Right cardiac atrium (tissue), 5 donors: ENCODE measurements at regions of chr1 and their contacts with region 1.

Region 1: GRCh38 chr1:227428803-227429202 is 110.5 kb upstream of the CDC42BPA start:
- DNase-seq: no peak
- ATAC-seq: peak in 1 of 2 donors; percentile 34
- H3K4me3 ChIP-seq: no peak overlapping the region
- H3K27ac ChIP-seq: no peak overlapping the region
- H3K4me1 ChIP-seq: peaks cover 13% of the 10 kb centered on the region
- H3K27me3 ChIP-seq: no peaks in the 10 kb centered on the region

Region 2: DNA sequence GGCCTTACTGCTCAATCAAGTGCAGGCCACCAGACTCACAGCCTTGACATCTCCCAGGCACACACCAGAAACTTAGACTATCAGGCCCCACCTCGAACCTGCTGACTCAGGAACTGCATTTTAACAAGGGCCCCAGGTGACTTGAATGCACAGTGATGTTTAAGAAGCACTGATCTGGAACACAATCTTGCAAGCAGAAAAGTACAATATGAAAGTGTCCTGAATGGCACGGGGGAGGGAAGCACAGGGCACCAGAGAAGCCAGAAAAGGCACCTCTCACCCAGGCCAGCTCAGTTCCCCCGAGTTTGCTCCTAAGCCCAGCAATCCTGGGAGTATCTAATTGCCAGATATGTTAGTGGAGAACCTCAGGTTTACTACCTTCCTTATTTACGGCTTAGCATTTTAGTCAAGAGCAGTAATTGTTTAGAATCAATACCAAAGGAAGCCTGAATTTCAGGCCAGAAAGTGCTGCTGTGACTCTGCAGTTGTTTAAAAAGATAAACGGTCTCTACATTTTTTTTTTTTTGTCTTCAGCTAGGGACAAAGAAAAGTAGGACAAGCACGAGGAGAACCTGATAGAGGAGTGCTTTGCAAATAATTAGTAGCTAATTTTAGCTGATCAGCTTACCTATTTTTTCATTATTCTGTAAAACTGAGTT is 59.6 kb before region 1 on chr1:
- intact Hi-C with region 1: loop called in 1 of 4 experiments (anchors 10 kb)
- DNase-seq: no peak
- ATAC-seq: no peak
- H3K4me3 ChIP-seq: no peak overlapping the region
- H3K27ac ChIP-seq: no peak overlapping the region
- H3K4me1 ChIP-seq: no peaks in the 10 kb centered on the region
- H3K27me3 ChIP-seq: no peaks in the 10 kb centered on the region